ENCODE measurements at regions of chr5 and their contacts with region 1.

Region 1: GRCh38 chr5:132419502-132420468 is 50.3 kb downstream of the SLC22A5 start:
- DNase-seq: peak; percentile 60 to 82 (median 77)
- H3K4me3 ChIP-seq: no peak overlapping the region
- H3K27ac ChIP-seq: peak overlapping the region in 1 of 2 donors; percentile 12
- H3K4me1 ChIP-seq: peaks cover 25% of the 10 kb centered on the region
- H3K27me3 ChIP-seq: no peaks in the 10 kb centered on the region
- CTCF ChIP-seq: peak; percentile 89 to 92 (median 89)
- EP300 ChIP-seq: no peak
- POLR2A ChIP-seq: no peak

Region 2: DNA sequence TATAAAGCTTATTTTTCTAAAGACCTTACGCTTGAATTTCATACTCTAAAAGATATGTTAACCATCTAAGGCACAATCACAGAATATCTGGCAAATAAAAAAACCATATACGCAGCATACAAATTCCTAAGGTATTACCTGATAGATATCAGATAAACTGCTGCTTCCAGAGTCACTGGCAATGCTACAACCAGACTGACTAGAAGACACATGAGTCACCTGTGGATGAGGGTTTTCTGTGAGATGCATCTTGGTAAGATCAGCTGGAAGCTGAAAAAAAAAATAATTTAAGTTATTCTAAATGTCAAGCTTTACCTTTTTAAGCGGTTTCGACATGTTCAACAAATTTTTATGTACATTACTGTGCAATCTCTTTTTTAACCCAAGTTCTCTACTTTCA is 898.5 kb before region 1 on chr5:
- intact Hi-C with region 1: no loop called
- DNase-seq: no peak
- H3K4me3 ChIP-seq: no peak overlapping the region
- H3K27ac ChIP-seq: no peak overlapping the region
- H3K4me1 ChIP-seq: no peaks in the 10 kb centered on the region
- H3K27me3 ChIP-seq: no peaks in the 10 kb centered on the region
- CTCF ChIP-seq: no peak
- EP300 ChIP-seq: no peak
- POLR2A ChIP-seq: no peak

Region 3: DNA sequence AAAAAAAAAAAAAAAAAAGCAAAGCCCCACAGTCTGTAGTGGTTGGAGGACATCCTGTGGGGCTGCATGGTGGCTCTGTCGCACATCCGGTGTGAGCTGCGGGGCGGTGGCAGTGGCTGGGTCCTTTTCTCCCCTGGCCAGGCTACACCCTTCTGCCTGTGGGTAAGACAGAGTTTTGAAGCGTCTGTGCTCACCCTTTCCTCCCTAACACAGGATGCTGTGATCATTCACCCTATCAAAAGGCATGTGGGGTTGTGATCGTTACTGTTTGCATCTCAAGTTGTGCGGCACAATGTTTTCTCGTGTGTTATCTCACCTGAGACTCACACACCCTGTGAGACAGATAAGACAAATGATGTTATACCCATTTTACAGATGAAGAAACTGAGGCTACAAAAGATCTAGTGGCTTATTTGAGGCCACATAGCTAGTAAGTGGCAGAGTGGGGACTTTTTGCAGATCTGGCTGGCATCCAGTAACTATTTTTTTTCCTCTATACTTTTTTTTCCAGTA is 53.3 kb after region 1 on chr5:
- intact Hi-C with region 1: loop called in 1 of 4 experiments (anchors 10 kb)
- DNase-seq: peak in 1 of 5 donors; percentile 21
- H3K4me3 ChIP-seq: no peak overlapping the region
- H3K27ac ChIP-seq: no peak overlapping the region
- H3K4me1 ChIP-seq: peaks cover 3% of the 10 kb centered on the region
- H3K27me3 ChIP-seq: no peaks in the 10 kb centered on the region
- CTCF ChIP-seq: no peak
- EP300 ChIP-seq: no peak
- POLR2A ChIP-seq: no peak

Region 4: DNA sequence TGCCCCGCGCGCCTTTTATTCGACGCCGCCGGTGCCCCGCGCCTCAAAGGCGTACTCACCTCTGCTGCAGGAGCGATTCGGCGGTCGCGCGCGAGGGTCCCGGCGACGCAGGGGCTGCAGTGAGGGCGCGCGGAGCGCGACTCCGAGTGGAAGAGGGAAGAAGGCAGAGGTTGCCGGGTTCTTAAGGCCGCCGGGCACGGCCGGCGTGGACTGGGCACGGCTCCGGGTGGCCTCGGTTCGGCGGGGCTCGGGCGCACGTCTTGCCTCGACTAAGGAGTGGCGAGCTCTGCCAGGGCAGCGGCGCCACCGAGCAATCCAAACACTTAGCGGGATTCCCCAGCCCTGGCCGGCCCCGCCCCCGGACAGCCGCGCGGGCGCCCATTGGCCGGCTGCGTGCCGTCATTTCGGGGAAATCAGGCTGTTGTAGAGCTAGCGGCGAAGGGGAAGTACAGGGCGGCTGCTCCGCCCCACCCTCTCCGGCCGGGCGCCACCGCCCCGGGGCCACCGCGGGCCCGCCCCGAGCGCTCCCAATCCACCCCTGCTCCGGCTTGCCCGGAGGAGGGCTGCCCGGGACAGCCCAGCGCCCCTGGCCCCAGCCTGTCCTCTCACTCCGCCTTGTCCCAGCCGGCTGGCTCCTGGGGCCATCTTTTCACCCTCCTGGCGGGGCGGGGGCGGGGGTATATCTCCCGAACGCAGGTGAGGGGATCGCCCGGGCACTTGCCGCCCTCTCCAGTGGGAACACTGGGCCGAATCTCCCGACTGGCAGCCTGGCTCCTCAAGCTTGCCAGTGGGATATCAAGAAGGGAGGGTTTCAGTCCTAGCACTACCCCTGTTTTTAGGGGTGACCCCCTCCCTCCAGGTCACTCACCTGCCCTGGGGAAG is 70.9 kb after region 1 on chr5 and contains the start of gene IRF1:
- intact Hi-C with region 1: loop called in 3 of 4 experiments (anchors 5 to 10 kb)
- DNase-seq: peak; percentile 95 to 97 (median 97)
- H3K4me3 ChIP-seq: peak within 1 kb of the TSS; percentile 93
- H3K27ac ChIP-seq: peak within 1 kb of the TSS; percentile 86 to 95
- H3K4me1 ChIP-seq: peaks cover 16% of the 10 kb centered on the region
- H3K27me3 ChIP-seq: no peaks in the 10 kb centered on the region
- CTCF ChIP-seq: peak in 1 of 3 donors; percentile 31
- EP300 ChIP-seq: peak; percentile 75
- POLR2A ChIP-seq: peak; percentile 90
- total RNA-seq, gene IRF1: 17.3 to 126 (median 31.1) TPM

Region 5: GRCh38 chr5:132495667-132496190 is 75.9 kb after region 1 on chr5:
- intact Hi-C with region 1: loop called (anchors 2 to 10 kb)
- DNase-seq: peak; percentile 87 to 94 (median 91)
- H3K4me3 ChIP-seq: peak overlapping the region; percentile 70
- H3K27ac ChIP-seq: peak overlapping the region; percentile 74 to 88
- H3K4me1 ChIP-seq: peaks cover 13% of the 10 kb centered on the region
- H3K27me3 ChIP-seq: no peaks in the 10 kb centered on the region
- CTCF ChIP-seq: no peak
- EP300 ChIP-seq: peak; percentile 15
- POLR2A ChIP-seq: peak; percentile 24

Measured in ovary (tissue), 10 donors.